ENCODE measurements at regions of chr9 and their contacts with region 1.

Region 1: GRCh38 chr9:72280913-72281500 is 84.0 kb downstream of the ZFAND5 start:
- DNase-seq: peak; percentile 59
- H3K4me3 ChIP-seq: peak overlapping the region in 1 of 2 experiments; percentile 47; a peak in 1 of 4 replicates
- H3K27ac ChIP-seq: no peak overlapping the region
- H3K4me1 ChIP-seq: no peaks in the 10 kb centered on the region
- H3K27me3 ChIP-seq: peaks cover 38% of the 10 kb centered on the region; the same call in 1 of the 2 replicates
- CTCF ChIP-seq: peak; percentile 98
- EP300 ChIP-seq: no peak
- RAD21 ChIP-seq: peak; percentile 90

Region 2: DNA sequence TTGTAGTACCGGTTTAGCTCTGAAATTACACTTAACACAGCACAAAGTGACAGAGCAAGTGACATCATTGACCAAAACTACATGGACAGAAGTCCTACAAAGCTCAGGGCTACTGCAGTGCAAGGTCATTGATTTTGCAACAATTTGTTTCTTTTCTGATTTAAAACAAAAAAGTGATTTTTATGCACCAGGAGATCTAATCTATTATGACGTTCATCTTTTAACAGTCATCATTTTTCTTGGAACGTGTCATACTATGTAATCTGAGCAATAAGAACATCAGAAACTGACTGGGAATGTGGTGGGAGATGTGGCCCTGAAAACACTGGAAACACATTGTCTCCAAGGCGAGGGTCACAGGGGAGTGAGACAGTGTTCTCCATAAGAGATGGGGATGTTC is 101.4 kb after region 1 on chr9:
- CTCF ChIA-PET with region 1: no interaction called
- POLR2A ChIA-PET with region 1: no interaction called
- DNase-seq: no peak
- H3K4me3 ChIP-seq: no peak overlapping the region
- H3K27ac ChIP-seq: peak overlapping the region in 1 of 2 experiments; percentile 17; a peak in 1 of 4 replicates
- H3K4me1 ChIP-seq: no peaks in the 10 kb centered on the region
- H3K27me3 ChIP-seq: no peaks in the 10 kb centered on the region
- CTCF ChIP-seq: no peak
- EP300 ChIP-seq: no peak
- RAD21 ChIP-seq: no peak

Region 3: GRCh38 chr9:72428329-72428728 is 147.3 kb after region 1 on chr9:
- CTCF ChIA-PET with region 1: no interaction called
- POLR2A ChIA-PET with region 1: no interaction called
- DNase-seq: no peak
- H3K4me3 ChIP-seq: peak overlapping the region in 1 of 2 experiments; percentile 15; a peak in 1 of 4 replicates
- H3K27ac ChIP-seq: peak overlapping the region; percentile 39 to 50; a peak in 3 of 4 replicates
- H3K4me1 ChIP-seq: peaks cover 0 to 11% of the 10 kb centered on the region in 2 experiments; a peak in 1 of 4 replicates
- H3K27me3 ChIP-seq: no peaks in the 10 kb centered on the region
- CTCF ChIP-seq: no peak
- EP300 ChIP-seq: no peak
- RAD21 ChIP-seq: no peak

Region 4: DNA sequence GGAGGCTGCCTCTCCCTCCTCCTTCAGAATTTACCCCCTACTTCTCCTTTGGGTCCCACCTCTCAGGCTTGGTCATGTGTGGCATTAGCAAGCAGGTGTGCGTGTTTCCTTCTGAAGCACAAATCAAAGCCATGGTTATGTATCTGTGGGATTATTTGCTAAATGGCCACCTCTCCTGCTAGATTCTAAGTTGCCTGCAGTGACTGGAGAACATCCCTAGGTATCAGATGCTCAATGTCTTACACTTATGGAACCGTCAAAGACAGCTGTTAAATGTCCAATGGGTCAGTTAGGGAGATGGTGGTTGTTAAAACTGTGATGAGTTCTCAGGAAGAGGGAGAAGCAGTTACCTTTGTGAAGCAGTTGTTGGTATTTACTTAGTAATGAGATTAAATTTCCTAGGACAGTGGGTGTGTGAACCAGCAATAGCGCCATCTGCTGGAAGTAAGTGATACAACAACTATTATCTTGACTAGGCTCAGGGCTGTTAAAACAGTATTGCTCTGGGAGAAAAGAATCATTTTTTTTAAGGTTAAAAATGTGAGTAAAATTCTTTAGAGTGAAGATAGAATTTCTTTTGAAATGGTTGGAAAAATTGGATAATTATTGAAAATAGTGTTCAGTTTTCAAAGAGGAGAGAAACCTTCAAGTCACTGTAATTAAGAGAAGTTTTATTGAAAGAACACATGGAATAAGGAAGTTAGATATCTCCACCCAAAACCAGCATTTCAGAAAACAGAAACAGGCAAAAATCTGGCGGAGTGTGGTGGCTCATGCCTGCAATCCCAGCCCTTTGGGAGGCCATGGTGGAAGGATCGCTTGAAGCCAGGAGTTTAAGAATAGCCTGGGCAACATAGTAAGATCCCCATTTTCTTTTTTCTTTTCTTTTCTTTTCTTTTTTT is 311.7 kb after region 1 on chr9:
- CTCF ChIA-PET with region 1: interaction called, 21 read pairs
- POLR2A ChIA-PET with region 1: no interaction called
- DNase-seq: peak; percentile 50
- H3K4me3 ChIP-seq: no peak overlapping the region; a peak in 1 of 4 replicates
- H3K27ac ChIP-seq: no peak overlapping the region
- H3K4me1 ChIP-seq: no peaks in the 10 kb centered on the region; a peak in 1 of 4 replicates
- H3K27me3 ChIP-seq: peaks cover 8% of the 10 kb centered on the region; the same call in 1 of the 2 replicates
- CTCF ChIP-seq: peak; percentile 90
- EP300 ChIP-seq: no peak
- RAD21 ChIP-seq: peak; percentile 72

Measured in SK-N-SH (cell line).